Activated CD8-positive, alpha-beta T cell treated with anti-CD3 and anti-CD28 coated beads for 36 hours (primary cell): ENCODE measurements at regions of chr3 and their contacts with region 1.

Region 1: GRCh38 chr3:59857589-59858346 is 807.9 kb upstream of the CFAP20DC start:
- DNase-seq: peak; percentile 93
- ATAC-seq: peak; percentile 97
- H3K4me3 Mint-ChIP-seq: no peak overlapping the region
- H3K27ac Mint-ChIP-seq: no peak overlapping the region
- H3K4me1 Mint-ChIP-seq: peaks cover 10% of the 10 kb centered on the region
- H3K27me3 Mint-ChIP-seq: no peaks in the 10 kb centered on the region
- CTCF ChIP-seq: peak; percentile 85

Region 2: DNA sequence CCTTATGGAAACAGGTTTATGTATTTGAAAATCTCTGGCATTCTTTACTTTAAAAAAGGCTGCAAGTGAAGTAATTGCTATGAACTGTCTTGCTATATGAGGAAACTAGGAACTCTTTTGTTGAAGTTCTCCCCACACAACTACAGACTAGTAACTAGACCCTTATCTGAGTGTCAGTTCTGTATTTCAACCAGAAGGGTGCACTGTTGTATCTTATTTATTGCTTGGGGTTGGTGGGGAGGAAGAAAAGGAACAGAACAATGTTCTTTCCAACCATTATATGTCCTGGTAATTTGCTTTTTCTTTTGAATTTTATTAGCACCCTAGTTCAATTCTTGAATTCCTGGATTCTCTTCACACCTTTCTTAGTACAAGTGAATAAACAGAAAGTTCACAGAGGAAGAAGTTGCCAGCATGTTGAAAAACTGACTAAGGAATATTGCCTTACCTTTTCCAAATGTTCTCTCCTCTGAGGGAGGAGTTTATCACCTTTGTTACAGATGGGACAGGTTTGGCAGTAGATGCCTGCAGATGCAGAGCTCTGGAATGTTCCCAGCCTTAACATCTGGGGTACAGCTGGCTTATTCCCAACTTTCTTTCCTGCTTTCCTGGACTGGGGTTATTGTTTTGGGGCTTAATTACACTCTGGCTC is 645.5 kb before region 1 on chr3:
- CTCF ChIA-PET with region 1: interaction called, 7 read pairs
- POLR2A ChIA-PET with region 1: no interaction called
- intact Hi-C with region 1: loop called (anchors 2 kb)
- DNase-seq: no peak
- ATAC-seq: no peak
- H3K4me3 Mint-ChIP-seq: no peak overlapping the region
- H3K27ac Mint-ChIP-seq: no peak overlapping the region
- H3K4me1 Mint-ChIP-seq: peaks cover 2% of the 10 kb centered on the region
- H3K27me3 Mint-ChIP-seq: peaks cover 5% of the 10 kb centered on the region
- CTCF ChIP-seq: peak; percentile 72

Region 3: DNA sequence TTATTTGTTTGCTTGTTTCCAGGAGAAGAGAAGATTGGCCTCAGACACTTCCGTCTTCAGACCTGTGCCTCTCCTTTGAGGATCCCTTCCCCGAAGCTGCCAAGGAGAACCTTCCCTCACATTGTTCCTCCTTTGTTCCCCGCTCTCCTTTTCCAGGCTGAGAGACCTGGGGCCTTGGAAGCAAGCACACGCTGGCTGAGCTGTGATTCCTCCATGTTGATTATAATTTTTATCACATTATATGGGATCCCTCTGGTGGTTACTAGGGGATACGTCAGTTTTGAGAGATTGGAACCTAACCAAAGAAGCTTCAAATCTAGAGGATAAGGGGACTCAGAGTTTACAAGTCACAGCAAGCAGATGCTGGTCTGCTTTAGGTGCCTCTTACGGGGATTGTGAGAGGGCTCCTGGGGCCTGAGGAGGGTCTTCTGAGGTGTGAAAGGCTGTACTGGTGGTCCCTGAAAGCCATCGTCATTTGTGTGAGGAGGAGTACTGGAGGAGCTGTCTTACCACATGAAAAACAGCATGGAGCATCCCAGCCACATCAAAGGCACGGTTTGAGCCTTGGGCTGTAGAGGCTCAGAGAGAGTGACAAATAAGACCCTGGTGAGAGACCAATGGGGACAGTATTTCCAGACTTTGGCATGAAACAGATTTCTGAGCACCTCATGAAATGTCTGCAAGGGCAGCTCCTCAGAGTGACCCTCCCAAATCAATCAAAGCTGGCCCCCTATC is 47.9 kb before region 1 on chr3:
- CTCF ChIA-PET with region 1: interaction called, 13 read pairs
- POLR2A ChIA-PET with region 1: no interaction called
- intact Hi-C with region 1: no loop called
- DNase-seq: no peak
- ATAC-seq: no peak
- H3K4me3 Mint-ChIP-seq: no peak overlapping the region
- H3K27ac Mint-ChIP-seq: no peak overlapping the region
- H3K4me1 Mint-ChIP-seq: peaks cover 11% of the 10 kb centered on the region
- H3K27me3 Mint-ChIP-seq: no peaks in the 10 kb centered on the region
- CTCF ChIP-seq: peak; percentile 29

Region 4: DNA sequence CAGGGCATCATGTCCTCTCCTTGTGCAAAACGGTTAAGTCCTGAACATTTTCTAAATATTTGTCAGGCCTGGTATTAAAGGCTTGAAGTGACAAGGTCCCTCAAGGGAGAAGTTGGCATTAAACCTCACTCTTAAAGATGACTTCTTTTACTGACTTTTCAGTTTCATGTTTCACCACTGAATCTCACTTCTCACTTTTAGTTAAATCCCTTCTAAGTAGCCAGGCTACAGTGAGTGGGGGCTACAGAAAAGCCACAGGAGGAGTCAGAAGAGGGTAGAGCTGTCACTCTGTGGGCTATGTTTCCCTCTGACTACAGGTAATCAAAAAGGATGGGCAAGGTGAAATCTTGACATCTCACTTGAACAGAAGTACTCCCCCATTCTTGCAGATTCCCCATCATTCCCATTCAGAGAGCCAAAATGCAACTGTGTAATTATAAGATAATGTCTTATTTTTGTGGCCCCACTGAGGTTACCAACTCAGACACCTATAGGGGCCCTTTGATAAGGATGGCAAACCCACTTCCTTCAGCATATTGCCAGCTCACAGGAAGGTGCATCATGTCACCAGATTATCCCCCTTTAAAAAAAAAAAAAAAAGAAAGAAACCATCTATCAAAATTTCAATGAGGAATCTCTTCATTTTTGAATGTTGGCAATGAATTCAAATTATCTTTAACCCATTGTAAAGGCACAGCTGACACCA is 17.8 kb before region 1 on chr3:
- CTCF ChIA-PET with region 1: interaction called, 17 read pairs
- POLR2A ChIA-PET with region 1: no interaction called
- intact Hi-C with region 1: no loop called
- DNase-seq: peak; percentile 60
- ATAC-seq: peak; percentile 94
- H3K4me3 Mint-ChIP-seq: no peak overlapping the region
- H3K27ac Mint-ChIP-seq: peak overlapping the region; percentile 52
- H3K4me1 Mint-ChIP-seq: peaks cover 20% of the 10 kb centered on the region
- H3K27me3 Mint-ChIP-seq: no peaks in the 10 kb centered on the region
- CTCF ChIP-seq: no peak

Region 5: GRCh38 chr3:59978979-59979378 is 121.2 kb after region 1 on chr3:
- CTCF ChIA-PET with region 1: no interaction called
- POLR2A ChIA-PET with region 1: no interaction called
- intact Hi-C with region 1: no loop called
- DNase-seq: peak; percentile 75
- ATAC-seq: peak; percentile 86
- H3K4me3 Mint-ChIP-seq: peak overlapping the region; percentile 3
- H3K27ac Mint-ChIP-seq: peak overlapping the region; percentile 94
- H3K4me1 Mint-ChIP-seq: peaks cover 34% of the 10 kb centered on the region
- H3K27me3 Mint-ChIP-seq: no peaks in the 10 kb centered on the region
- CTCF ChIP-seq: no peak